Transverse colon (tissue), 4 donors: ENCODE measurements at regions of chr1 and their contacts with region 1.

Region 1: DNA sequence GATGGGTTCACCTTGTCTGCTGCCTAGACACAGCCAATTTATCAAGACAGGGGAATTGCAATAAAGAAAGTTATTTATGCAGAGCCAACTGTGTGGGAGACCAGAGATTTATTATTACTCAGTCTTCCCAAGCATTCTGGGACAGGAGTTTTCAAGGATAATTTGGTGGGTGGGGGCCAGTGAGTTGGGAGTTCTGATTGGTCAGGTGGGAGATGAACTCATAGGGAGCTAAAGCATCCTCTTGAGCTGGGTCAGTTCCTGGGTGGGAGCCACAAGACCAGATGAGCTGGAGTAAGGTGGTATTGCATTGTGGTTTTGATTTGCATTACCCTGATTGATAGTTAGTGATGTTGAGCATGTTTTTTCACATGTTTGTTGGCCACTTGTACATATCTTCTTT is 86.1 kb downstream of the PRKAB2 start:
- DNase-seq: no peak
- H3K4me3 ChIP-seq: no peak overlapping the region
- H3K27ac ChIP-seq: no peak overlapping the region
- H3K4me1 ChIP-seq: peaks cover 0 to 13% (median 9%) of the 10 kb centered on the region in 4 donors
- H3K27me3 ChIP-seq: peaks cover 70% of the 10 kb centered on the region
- CTCF ChIP-seq: no peak
- EP300 ChIP-seq: no peak
- POLR2A ChIP-seq: no peak

Region 2: GRCh38 chr1:147124266-147124665 is 38.1 kb after region 1 on chr1:
- in situ Hi-C with region 1: no loop called
- intact Hi-C with region 1: loop called (anchors 1 kb)
- DNase-seq: no peak
- H3K4me3 ChIP-seq: no peak overlapping the region
- H3K27ac ChIP-seq: no peak overlapping the region
- H3K4me1 ChIP-seq: no peaks in the 10 kb centered on the region
- H3K27me3 ChIP-seq: no peaks in the 10 kb centered on the region
- CTCF ChIP-seq: no peak
- EP300 ChIP-seq: no peak
- POLR2A ChIP-seq: no peak